ENCODE measurements at regions of chr18 and their contacts with region 1.

Region 1: GRCh38 chr18:21841570-21841969 is 101.0 kb downstream of the MIB1 start:
- DNase-seq: no peak
- ATAC-seq: no peak
- H3K4me3 ChIP-seq: no peak overlapping the region
- H3K27ac ChIP-seq: no peak overlapping the region
- H3K4me1 ChIP-seq: no peaks in the 10 kb centered on the region
- H3K27me3 ChIP-seq: no peaks in the 10 kb centered on the region
- CTCF ChIP-seq: no peak

Region 2: DNA sequence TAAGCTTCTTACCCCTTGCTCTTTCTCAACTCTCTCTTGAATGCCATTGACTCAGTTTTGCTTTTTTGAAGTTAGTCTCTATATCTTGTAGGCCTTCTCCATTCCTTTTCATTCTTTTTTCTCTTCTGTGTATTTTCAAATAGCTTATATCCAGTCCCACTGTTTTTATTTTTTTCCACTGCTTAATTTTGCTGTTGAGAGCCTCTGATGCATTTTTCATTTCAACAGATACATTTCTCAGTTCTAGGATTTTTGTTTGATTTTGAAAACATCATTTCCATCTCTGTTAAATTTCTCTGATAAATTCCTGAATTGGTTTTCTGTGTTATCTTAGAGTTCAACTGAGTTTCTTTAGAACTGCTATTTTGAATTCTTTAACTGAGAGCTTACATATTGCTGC is 55.0 kb before region 1 on chr18:
- intact Hi-C with region 1: loop called in 1 of 10 experiments (anchors 10 kb)
- DNase-seq: no peak
- ATAC-seq: no peak
- H3K4me3 ChIP-seq: no peak overlapping the region
- H3K27ac ChIP-seq: no peak overlapping the region
- H3K4me1 ChIP-seq: no peaks in the 10 kb centered on the region
- H3K27me3 ChIP-seq: no peaks in the 10 kb centered on the region
- CTCF ChIP-seq: no peak

Region 3: GRCh38 chr18:22020127-22020866 is 178.7 kb after region 1 on chr18:
- intact Hi-C with region 1: no loop called
- DNase-seq: no peak
- ATAC-seq: no peak
- H3K4me3 ChIP-seq: no peak overlapping the region
- H3K27ac ChIP-seq: no peak overlapping the region
- H3K4me1 ChIP-seq: no peaks in the 10 kb centered on the region
- H3K27me3 ChIP-seq: no peaks in the 10 kb centered on the region
- CTCF ChIP-seq: no peak

Measured in heart right ventricle (tissue), 16 donors.